Pancreas (tissue), 10 donors: ENCODE measurements at regions of chr1 and their contacts with region 1.

Region 1: DNA sequence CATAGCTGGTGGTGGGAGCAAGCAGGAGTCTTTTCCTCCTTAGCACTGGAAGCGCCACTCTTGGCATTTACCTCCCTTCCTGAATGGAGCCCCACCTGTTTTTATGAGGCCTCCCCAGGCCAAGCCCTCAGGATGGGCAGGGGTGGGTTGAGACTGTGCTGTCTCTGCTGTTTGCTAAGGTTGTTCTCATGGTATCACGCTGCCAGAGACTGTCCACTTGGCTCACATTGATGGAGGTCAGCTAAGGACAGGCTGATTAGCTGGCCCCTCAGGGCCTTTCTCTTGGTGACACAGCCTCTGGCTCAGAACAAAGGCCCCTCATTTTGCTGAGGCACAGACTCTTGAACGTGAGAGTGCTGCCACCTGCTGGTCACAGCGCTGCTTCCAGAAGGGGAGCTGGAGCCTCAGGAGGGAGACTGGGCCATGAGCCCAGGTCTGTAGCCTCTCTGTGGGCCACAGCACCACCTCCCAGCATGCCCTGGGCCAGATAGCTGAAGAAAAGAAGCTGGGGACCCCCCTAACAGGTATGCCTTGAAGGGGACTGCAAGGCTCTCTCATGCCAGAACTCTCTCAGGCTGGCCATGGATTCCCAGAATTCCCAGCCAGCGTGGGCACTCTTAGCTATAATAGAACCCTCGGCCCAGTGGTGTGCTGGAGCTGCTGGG is 85.6 kb downstream of the CD58 start:
- DNase-seq: peak; percentile 75 to 98 (median 89)
- ATAC-seq: peak; percentile 75 to 90 (median 84)
- H3K4me3 ChIP-seq: no peak overlapping the region
- H3K27ac ChIP-seq: peak overlapping the region in 3 of 4 donors; percentile 30 to 53 (median 48)
- H3K4me1 ChIP-seq: peaks cover 0 to 10% (median 0%) of the 10 kb centered on the region in 3 donors
- H3K27me3 ChIP-seq: no peaks in the 10 kb centered on the region
- CTCF ChIP-seq: peak; percentile 86 to 91 (median 87)

Region 2: DNA sequence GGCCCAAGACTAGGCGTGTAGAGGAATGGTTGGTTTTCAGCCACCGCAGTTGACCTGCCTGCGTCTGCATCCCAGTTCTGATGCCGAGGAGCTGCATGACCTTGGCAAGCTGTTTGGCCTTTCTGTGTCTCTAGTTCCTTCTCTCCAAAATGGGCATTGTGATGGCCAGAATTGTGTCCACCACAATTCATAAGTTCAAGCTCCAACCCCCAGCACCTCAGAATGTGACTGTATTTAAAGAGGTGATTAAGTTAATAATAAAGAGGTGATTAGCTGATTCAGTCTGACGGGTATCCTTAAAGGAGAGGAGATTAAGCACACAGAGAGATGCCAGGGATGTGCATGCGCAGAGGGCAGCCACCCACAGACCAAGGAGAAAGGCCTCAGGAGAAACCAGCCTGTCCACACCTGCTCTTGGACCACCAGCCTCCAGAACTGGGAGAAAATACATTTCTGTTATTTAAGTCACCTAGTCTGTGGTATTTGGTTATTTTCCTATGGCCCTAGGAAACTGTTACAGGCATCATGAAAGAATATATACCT is 345.5 kb before region 1 on chr1:
- intact Hi-C with region 1: loop called in 1 of 3 experiments (anchors 5 kb)
- DNase-seq: no peak
- ATAC-seq: peak in 2 of 4 donors; percentile 4 to 8
- H3K4me3 ChIP-seq: no peak overlapping the region
- H3K27ac ChIP-seq: no peak overlapping the region
- H3K4me1 ChIP-seq: no peaks in the 10 kb centered on the region
- H3K27me3 ChIP-seq: peaks cover 0 to 4% (median 0%) of the 10 kb centered on the region in 4 donors
- CTCF ChIP-seq: no peak

Region 3: GRCh38 chr1:116232989-116233514 is 252.2 kb before region 1 on chr1:
- intact Hi-C with region 1: loop called in 1 of 3 experiments (anchors 10 kb)
- DNase-seq: peak in 2 of 6 donors; percentile 30 to 31
- ATAC-seq: peak; percentile 69 to 94 (median 83)
- H3K4me3 ChIP-seq: no peak overlapping the region
- H3K27ac ChIP-seq: no peak overlapping the region
- H3K4me1 ChIP-seq: peaks cover 0 to 5% (median 2%) of the 10 kb centered on the region in 3 donors
- H3K27me3 ChIP-seq: no peaks in the 10 kb centered on the region
- CTCF ChIP-seq: no peak

Region 4: DNA sequence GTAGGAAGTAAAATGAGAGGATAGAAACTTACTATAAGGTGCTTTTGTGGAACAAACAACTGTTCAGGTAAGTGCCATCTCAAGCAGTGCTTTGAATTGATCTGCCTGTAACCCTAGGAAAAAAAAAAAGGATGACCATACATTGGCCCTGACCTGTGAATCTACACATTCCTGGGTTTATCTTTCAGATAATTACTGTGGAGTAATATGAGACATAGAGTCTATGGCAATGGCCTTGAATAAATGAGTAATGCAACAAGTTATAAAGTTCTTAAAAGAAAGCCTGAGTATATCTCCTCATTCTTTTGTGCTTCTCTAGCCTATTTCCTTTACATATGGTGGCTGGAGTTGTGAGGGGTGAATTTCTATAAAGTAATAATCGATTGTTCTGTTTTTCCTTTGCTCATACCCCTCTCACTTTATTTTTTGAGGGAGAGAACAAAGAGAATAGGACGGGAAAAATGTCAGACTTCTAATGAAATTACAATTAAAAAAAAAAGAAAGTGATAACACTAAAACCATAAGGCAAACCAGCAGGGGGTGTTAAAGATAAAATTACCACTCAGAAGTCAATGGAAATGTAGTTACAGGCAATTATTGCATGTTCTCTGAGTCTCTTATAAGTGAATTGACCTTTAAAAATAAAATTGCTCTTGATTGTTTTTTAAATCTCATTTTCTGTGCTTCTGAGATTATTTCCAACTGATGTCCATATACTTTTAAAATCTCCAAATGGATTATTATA is 124.6 kb before region 1 on chr1:
- intact Hi-C with region 1: loop called in 1 of 3 experiments (anchors 10 kb)
- DNase-seq: no peak
- ATAC-seq: peak in 3 of 4 donors; percentile 52 to 59 (median 55)
- H3K4me3 ChIP-seq: no peak overlapping the region
- H3K27ac ChIP-seq: peak overlapping the region in 1 of 4 donors; percentile 0
- H3K4me1 ChIP-seq: peaks cover 0 to 12% (median 6%) of the 10 kb centered on the region in 3 donors
- H3K27me3 ChIP-seq: no peaks in the 10 kb centered on the region
- CTCF ChIP-seq: peak in 2 of 4 donors; percentile 19 to 21

Region 5: DNA sequence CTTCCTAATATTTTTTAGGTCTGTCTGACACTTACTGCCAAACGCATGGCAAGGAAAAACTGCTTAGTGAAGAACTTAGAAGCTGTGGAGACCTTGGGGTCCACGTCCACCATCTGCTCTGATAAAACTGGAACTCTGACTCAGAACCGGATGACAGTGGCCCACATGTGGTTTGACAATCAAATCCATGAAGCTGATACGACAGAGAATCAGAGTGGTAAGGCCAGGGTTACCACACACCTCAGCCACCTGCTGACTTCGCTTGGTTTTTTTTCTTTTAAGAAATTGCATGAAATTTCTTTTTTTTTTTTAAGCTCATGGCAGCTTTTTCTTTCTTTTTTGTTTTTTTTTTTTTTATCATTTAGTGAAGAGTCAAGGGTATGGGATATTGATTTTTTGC is 95.0 kb before region 1 on chr1:
- intact Hi-C with region 1: no loop called
- DNase-seq: no peak
- ATAC-seq: no peak
- H3K4me3 ChIP-seq: no peak overlapping the region
- H3K27ac ChIP-seq: no peak overlapping the region
- H3K4me1 ChIP-seq: peaks cover 9 to 39% (median 33%) of the 10 kb centered on the region in 3 donors
- H3K27me3 ChIP-seq: no peaks in the 10 kb centered on the region
- CTCF ChIP-seq: no peak